ENCODE measurements at regions of chrX and their contacts with region 1.

Region 1: DNA sequence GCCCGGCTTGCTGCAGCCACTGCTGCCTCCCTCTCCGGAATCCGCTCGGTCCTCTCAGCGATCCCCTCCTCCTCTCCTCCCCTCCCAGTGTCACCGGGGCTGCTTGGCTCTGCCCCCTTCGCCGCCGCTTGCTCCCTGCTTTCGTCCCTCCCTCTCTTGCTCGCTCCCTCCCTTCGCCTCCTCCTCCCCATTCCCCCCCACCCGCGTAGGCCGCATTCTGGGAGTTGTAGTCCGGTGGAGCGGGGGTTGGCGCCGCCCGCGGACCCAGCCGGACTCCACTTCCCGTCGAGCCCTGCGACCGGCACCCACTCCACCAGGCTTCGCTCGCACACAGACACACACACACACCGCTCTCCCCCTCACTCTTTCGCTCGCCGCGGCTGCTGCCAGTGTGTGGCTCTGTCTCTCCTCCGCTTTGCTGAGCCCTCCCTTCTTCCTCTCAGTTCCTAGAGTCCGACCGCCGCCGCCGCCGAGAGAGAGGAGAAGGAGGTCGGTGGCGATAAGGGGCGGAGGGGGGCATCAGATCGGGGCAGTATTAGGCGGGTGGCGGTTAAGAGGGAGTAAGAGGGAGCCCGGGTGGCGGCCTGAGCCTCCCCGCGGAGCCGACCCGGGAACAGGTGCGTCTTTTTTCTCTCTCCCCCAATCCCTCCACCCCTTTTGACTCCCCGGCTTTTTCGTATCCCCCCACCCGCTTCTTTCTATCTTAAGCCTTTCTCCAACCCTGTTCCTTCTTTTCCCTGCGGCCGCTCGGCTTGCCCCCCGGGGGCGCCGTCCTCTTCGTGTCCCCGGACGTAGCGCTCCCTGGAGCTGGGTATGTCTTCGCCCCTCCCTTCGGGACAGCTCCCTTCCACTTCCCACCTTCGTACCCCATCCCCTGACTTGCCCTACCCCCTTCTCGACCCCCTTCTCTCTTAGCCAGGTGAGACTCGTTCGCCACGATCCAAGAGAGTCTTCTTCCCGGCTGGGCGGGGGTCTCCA is at the start of gene BCORL1:
- DNase-seq: peak; percentile 95
- ATAC-seq: peak; percentile 96
- total RNA-seq, gene BCORL1: 11.3 TPM

Region 2: DNA sequence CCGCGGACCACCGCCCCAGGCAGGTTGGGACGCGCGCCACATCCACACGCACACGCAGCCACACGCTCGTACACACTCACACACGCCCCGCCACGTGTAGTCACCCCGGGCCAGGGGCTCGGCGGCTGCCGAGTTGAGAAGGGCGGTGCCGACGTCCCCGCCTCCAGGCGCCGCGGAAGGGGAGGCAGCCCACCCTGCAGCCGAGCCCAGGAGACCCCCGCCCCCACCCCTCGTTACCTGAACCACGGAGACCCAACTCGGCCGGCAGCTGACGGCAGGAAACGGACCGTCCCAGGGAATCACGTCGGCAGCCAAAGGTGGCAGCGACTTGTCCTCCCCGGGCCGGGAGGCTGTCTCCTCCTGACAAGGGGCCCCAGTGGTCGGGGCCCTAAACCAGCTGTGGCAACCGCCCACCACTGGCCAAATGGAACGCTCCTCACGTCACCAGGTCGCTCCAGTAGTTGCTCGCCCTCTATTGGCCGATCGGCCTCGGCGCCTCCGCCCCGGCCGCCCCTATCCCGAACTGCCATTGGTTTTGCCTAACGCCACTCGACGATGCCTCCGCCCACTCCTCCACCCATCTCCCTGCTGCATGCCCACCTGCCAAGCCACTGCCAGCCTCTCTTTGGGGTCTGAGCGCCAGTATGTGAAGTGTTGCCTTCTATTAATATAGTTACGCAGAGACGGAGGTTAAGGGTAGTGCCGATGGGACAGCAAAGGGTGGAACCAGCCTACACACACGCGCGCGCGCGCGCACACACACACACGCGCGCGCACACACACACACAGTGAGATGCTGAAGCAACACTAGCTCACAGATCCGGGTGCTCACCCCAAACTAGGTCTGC is 138.9 kb before region 1 on chrX and contains the start of gene ZDHHC9:
- intact Hi-C with region 1: loop called (anchors 10 kb)
- DNase-seq: peak; percentile 93
- ATAC-seq: peak; percentile 98
- total RNA-seq, gene ZDHHC9: 17.9 TPM

Region 3: DNA sequence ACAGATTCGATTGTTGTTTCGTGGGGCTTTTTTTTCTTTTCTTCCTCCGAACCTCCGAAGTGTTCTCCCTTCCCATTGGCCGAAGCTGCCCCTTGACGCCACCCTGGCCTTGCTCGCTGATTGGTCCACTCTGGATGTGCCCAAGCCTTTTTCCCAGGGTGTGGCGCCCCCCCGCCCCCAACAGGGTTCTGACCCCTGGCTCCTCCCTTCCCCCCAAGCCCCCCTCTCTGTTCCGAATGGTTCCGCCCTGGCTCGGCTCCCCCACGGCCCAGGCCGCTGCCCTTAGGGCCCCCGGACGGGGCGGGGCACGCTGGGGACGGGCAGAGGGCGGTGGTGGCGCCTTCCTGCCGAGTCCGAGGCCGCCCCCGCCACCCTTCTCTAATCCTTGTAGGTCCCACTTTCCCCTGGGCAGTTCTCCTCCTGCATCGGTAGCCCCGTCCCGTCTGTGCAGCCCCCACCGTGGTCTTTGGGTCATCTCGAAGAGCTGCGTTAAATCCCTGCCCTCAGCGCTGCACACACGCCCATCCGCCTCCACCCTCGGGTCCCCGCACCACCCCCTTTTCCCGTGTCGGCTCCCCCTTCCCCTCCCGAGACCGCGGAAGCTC is 51.0 kb before region 1 on chrX:
- intact Hi-C with region 1: loop called (anchors 1 kb)
- DNase-seq: peak; percentile 95
- ATAC-seq: peak; percentile 96

Region 4: GRCh38 chrX:130024127-130024526 is 41.6 kb after region 1 on chrX:
- intact Hi-C with region 1: loop called (anchors 5 kb)
- DNase-seq: peak; percentile 85
- ATAC-seq: peak; percentile 91

Region 5: GRCh38 chrX:130079824-130080406 is 97.4 kb after region 1 on chrX:
- intact Hi-C with region 1: no loop called
- DNase-seq: no peak
- ATAC-seq: peak; percentile 67

Region 6: GRCh38 chrX:130155564-130155963 is 173.0 kb after region 1 on chrX:
- intact Hi-C with region 1: no loop called
- DNase-seq: no peak
- ATAC-seq: no peak

Region 7: GRCh38 chrX:130606425-130606824 is 623.9 kb after region 1 on chrX:
- intact Hi-C with region 1: no loop called
- DNase-seq: no peak
- ATAC-seq: no peak

Measured in Right ventricle myocardium inferior (tissue), 1 donor.